CD4-positive, alpha-beta memory T cell (primary cell): ENCODE measurements at regions of chr4 and their contacts with region 1.

Region 1: GRCh38 chr4:145609481-145610427 is 9.4 kb upstream of the MMAA start:
- DNase-seq: peak; percentile 38 to 48 (median 46)
- H3K4me3 ChIP-seq: no peak overlapping the region
- H3K4me3 Mint-ChIP-seq: no peak overlapping the region
- H3K27ac ChIP-seq: no peak overlapping the region
- H3K27ac Mint-ChIP-seq: peak overlapping the region in 2 of 7 donors; percentile 19 to 51
- H3K4me1 ChIP-seq: no peaks in the 10 kb centered on the region
- H3K4me1 Mint-ChIP-seq: peaks cover 0 to 6% (median 2%) of the 10 kb centered on the region in 4 donors
- H3K27me3 ChIP-seq: no peaks in the 10 kb centered on the region
- H3K27me3 Mint-ChIP-seq: peaks cover 3 to 8% of the 10 kb centered on the region in 2 donors

Region 2: DNA sequence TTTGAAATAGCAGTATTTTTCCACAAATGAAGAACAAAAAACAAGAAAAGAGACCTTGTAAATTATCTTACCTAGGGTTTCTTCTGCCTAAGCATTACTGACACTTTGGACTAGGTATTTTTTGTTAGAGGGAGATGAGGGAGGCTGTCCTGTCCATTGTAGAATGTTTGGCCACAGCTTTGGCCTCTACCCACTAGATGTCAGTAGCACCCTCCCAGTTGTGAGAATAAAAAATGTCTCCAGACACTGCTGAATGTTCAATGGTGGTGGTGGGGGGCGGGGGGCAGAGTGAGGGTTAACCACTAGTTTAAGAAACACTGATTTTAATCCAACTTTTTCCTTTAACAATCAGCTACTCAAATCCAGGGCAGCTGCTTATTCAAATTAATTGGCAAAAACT is 455.2 kb before region 1 on chr4:
- CTCF ChIA-PET with region 1: interaction called, 3 read pairs
- POLR2A ChIA-PET with region 1: no interaction called
- intact Hi-C with region 1: loop called (anchors 2 kb)
- DNase-seq: no peak
- H3K4me3 ChIP-seq: no peak overlapping the region
- H3K4me3 Mint-ChIP-seq: no peak overlapping the region
- H3K27ac ChIP-seq: no peak overlapping the region
- H3K27ac Mint-ChIP-seq: peak overlapping the region in 1 of 7 donors; percentile 34
- H3K4me1 ChIP-seq: no peaks in the 10 kb centered on the region
- H3K4me1 Mint-ChIP-seq: peaks cover 0 to 9% (median 4%) of the 10 kb centered on the region in 4 donors
- H3K27me3 ChIP-seq: no peaks in the 10 kb centered on the region
- H3K27me3 Mint-ChIP-seq: no peaks in the 10 kb centered on the region

Region 3: GRCh38 chr4:145234091-145234706 is 375.6 kb before region 1 on chr4:
- CTCF ChIA-PET with region 1: interaction called, 10 read pairs
- POLR2A ChIA-PET with region 1: no interaction called
- intact Hi-C with region 1: loop called (anchors 1 kb)
- DNase-seq: peak; percentile 31 to 55 (median 43)
- H3K4me3 ChIP-seq: no peak overlapping the region
- H3K4me3 Mint-ChIP-seq: no peak overlapping the region
- H3K27ac ChIP-seq: no peak overlapping the region
- H3K27ac Mint-ChIP-seq: no peak overlapping the region
- H3K4me1 ChIP-seq: no peaks in the 10 kb centered on the region
- H3K4me1 Mint-ChIP-seq: no peaks in the 10 kb centered on the region
- H3K27me3 ChIP-seq: no peaks in the 10 kb centered on the region
- H3K27me3 Mint-ChIP-seq: peaks cover 0 to 10% of the 10 kb centered on the region in 2 donors